ENCODE measurements at regions of chr11 and their contacts with region 1.

Region 1: GRCh38 chr11:3341298-3341697 is 37.6 kb downstream of the ZNF195 start:
- DNase-seq: peak; percentile 28
- ATAC-seq: peak; percentile 51; the same call in 2 of the 3 replicates
- H3K4me3 ChIP-seq: no peak overlapping the region
- H3K27ac ChIP-seq: no peak overlapping the region
- H3K4me1 ChIP-seq: no peaks in the 10 kb centered on the region
- H3K27me3 ChIP-seq: peaks cover 2 to 7% of the 10 kb centered on the region in 2 experiments; a peak in 3 of 5 replicates
- CTCF ChIP-seq: peak; percentile 54
- EP300 ChIP-seq: no peak
- POLR2A ChIP-seq: no peak
- RAD21 ChIP-seq: 0 out of 2 replicates have a peak, but pooled peaks have one; percentile 47

Region 2: DNA sequence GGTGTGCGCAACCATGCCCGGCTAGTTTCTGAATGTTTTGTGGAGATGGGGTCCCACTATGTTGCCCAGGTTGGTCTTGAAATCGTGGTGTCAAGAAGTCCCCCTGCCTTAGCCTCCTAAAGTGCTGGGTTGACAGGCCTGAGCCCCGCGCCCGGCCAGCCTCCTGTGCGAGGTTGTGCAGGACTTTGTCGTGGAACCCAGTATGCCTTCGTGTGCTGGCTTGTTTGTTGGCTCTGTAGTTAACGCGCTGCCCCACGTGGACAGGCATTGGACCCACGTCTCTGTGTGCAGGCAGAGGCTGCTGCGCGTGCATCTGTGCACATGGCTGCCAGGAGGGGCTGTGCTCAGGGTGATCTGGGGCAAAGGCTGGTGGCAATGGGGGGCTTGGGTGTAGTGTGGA is 71.5 kb after region 1 on chr11:
- CTCF ChIA-PET with region 1: interaction called, 30 read pairs
- POLR2A ChIA-PET with region 1: no interaction called
- in situ Hi-C with region 1: no loop called
- intact Hi-C with region 1: loop called (anchors 10 kb)
- DNase-seq: no peak
- ATAC-seq: no peak
- H3K4me3 ChIP-seq: no peak overlapping the region
- H3K27ac ChIP-seq: no peak overlapping the region
- H3K4me1 ChIP-seq: no peaks in the 10 kb centered on the region
- H3K27me3 ChIP-seq: no peaks in the 10 kb centered on the region; a peak in 1 of 5 replicates
- CTCF ChIP-seq: no peak
- EP300 ChIP-seq: no peak
- POLR2A ChIP-seq: no peak
- RAD21 ChIP-seq: no peak

Region 3: DNA sequence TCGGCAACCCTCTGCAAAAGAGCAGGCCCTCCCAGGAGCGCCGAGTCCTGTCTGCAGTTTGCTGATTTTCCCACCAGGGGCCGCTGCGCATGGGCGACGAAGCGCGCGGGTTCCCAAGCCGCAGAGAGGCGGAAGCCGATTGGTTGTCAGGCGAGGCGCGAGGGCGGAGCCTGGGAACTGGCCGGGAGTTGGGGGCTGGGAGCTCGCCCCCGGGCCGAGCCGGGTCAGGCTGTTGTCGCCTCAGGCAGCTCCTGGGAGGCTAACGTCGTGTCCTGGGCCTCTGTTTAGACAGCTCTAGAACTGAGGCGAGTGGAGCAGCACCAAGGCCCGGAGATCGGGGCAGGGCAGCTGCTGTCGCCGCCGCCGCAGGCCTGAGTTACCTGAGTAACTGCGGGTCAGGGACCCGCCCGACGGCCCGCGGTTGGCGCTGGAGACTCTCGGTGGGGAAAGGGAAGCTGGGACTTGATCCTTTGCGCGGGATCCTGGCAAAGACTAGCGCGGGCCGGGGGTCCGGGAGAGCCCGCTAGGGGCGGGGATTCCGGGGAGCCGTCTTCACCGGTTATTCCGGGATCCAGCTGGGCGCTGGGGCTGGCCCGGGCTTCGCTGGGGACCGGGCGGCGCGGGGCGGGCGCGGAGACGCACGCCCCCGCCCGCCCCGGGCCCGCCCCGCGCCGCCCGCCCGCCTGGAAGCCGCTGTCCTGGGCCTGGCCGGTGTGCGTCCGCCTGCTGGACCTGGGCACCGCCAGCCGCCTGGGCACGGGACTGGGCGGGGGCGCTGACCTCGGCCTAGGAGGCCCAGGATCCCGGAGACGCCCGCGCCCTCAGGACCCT is 513.9 kb after region 1 on chr11 and contains the start of gene STIM1:
- CTCF ChIA-PET with region 1: no interaction called
- POLR2A ChIA-PET with region 1: no interaction called
- in situ Hi-C with region 1: no loop called
- intact Hi-C with region 1: no loop called
- DNase-seq: peak; percentile 84
- ATAC-seq: peak; percentile 88
- H3K4me3 ChIP-seq: peak within 1 kb of the TSS; percentile 83 to 96 (median 87)
- H3K27ac ChIP-seq: peak within 1 kb of the TSS; percentile 86
- H3K4me1 ChIP-seq: peaks cover 49% of the 10 kb centered on the region
- H3K27me3 ChIP-seq: no peaks in the 10 kb centered on the region; a peak in 1 of 5 replicates
- CTCF ChIP-seq: peak; percentile 98
- EP300 ChIP-seq: no peak
- POLR2A ChIP-seq: peak in 1 of 2 experiments; percentile 65; a peak in 3 of 4 replicates
- RAD21 ChIP-seq: peak; percentile 95
- total RNA-seq, gene STIM1: 16.3 and 19.2 TPM in 2 replicates

Region 4: GRCh38 chr11:4064278-4064955 is 723.1 kb after region 1 on chr11:
- CTCF ChIA-PET with region 1: no interaction called
- POLR2A ChIA-PET with region 1: no interaction called
- in situ Hi-C with region 1: no loop called
- intact Hi-C with region 1: no loop called
- DNase-seq: no peak
- ATAC-seq: peak; percentile 67
- H3K4me3 ChIP-seq: no peak overlapping the region
- H3K27ac ChIP-seq: no peak overlapping the region
- H3K4me1 ChIP-seq: peaks cover 17% of the 10 kb centered on the region
- H3K27me3 ChIP-seq: no peaks in the 10 kb centered on the region
- CTCF ChIP-seq: peak; percentile 20; the same call in 1 of the 2 replicates
- EP300 ChIP-seq: no peak
- POLR2A ChIP-seq: no peak
- RAD21 ChIP-seq: no peak

Measured in HepG2 (cell line).